ENCODE measurements at regions of chr10 and their contacts with region 1.

Region 1: DNA sequence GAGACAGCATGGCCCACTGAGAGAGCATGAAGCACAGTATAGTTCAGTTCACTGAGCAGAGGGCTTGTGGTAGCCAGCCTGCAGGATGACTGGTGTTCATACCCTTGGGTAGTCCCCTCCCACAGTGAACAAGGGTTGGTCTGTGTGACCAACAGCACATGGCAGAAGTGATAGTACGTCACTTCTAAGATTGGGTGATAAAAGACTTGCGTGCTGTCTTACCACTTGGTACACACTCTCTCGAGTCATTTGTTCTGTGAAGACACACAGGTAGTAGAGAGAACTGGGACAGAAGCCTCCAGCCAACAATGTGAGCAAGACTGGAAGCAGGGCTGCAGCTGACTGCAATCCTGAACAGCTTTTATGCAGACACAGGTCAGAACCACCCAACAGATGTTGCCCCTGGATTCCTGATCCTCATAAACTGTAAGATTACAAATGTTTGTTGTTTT is 14.6 kb downstream of the EPC1 start:
- DNase-seq: peak; percentile 87
- ATAC-seq: peak; percentile 95
- H3K4me3 Mint-ChIP-seq: peak overlapping the region; percentile 75
- H3K27ac Mint-ChIP-seq: peak overlapping the region; percentile 98
- H3K4me1 Mint-ChIP-seq: peaks cover 96% of the 10 kb centered on the region
- H3K27me3 Mint-ChIP-seq: no peaks in the 10 kb centered on the region

Region 2: GRCh38 chr10:31549896-31550295 is 782.4 kb before region 1 on chr10:
- CTCF ChIA-PET with region 1: no interaction called
- POLR2A ChIA-PET with region 1: no interaction called
- intact Hi-C with region 1: no loop called
- DNase-seq: no peak
- ATAC-seq: no peak
- H3K4me3 Mint-ChIP-seq: no peak overlapping the region
- H3K27ac Mint-ChIP-seq: no peak overlapping the region
- H3K4me1 Mint-ChIP-seq: no peaks in the 10 kb centered on the region
- H3K27me3 Mint-ChIP-seq: no peaks in the 10 kb centered on the region

Region 3: DNA sequence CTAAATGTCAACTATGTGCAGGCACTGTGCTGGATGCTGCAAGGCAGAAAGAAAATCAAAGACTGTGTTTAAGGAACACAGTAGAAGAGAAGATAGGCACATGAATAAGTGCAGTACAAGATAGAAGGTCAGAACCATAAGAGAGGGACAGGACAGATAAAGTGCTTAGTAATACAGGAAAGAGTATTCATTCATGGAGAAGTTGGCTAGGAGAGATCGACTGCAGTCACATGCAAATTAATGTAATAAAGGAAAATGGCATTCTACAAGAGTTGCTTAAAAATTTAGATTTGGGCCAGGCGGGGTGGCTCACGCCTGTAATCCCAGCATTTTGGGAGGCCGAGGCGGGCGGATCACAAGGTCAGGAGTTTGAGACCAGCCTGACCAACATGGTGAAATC is 300.9 kb before region 1 on chr10:
- CTCF ChIA-PET with region 1: no interaction called
- POLR2A ChIA-PET with region 1: no interaction called
- intact Hi-C with region 1: no loop called
- DNase-seq: no peak
- ATAC-seq: no peak
- H3K4me3 Mint-ChIP-seq: no peak overlapping the region
- H3K27ac Mint-ChIP-seq: no peak overlapping the region
- H3K4me1 Mint-ChIP-seq: peaks cover 2% of the 10 kb centered on the region
- H3K27me3 Mint-ChIP-seq: no peaks in the 10 kb centered on the region

Region 4: DNA sequence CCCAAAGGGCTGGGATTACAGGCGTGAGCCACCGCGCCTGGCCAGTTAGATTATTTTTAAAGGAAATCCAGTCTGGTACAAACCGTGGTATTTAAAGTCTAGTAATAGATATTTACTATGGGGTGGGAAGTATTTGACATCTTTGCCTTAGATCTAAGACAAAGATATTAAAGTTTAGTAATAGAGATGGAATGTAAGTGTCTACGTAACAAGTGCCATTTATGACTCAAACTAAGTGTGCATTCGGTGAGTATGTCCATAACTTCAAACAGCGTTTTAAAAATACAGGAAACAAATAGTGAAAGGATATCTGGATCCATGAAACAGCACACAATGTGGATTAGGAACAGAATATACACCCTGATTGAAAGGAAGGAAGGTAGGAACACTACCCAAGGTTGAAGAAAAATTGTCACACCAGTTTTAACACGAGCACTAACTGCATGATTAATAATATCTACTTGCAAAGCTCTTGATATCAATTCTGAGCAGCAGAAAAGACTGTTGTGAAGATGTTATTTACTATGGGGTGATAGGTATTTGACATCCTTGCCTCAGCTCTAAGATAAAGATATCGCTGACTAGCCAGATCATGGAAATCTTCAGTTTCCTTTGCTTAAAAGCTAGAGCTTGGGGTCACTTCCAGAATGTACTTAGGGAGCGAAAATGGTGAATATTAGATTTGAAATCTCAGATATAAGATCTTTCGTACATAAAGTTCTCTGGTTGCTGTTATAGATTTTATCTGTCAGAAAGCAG is 34.1 kb before region 1 on chr10:
- CTCF ChIA-PET with region 1: interaction called, 4 read pairs
- POLR2A ChIA-PET with region 1: interaction called, 3 read pairs
- intact Hi-C with region 1: loop called in 1 of 2 experiments (anchors 5 kb)
- DNase-seq: no peak
- ATAC-seq: no peak
- H3K4me3 Mint-ChIP-seq: peak overlapping the region; percentile 50
- H3K27ac Mint-ChIP-seq: peak overlapping the region; percentile 82
- H3K4me1 Mint-ChIP-seq: peaks cover 59% of the 10 kb centered on the region
- H3K27me3 Mint-ChIP-seq: no peaks in the 10 kb centered on the region

Region 5: DNA sequence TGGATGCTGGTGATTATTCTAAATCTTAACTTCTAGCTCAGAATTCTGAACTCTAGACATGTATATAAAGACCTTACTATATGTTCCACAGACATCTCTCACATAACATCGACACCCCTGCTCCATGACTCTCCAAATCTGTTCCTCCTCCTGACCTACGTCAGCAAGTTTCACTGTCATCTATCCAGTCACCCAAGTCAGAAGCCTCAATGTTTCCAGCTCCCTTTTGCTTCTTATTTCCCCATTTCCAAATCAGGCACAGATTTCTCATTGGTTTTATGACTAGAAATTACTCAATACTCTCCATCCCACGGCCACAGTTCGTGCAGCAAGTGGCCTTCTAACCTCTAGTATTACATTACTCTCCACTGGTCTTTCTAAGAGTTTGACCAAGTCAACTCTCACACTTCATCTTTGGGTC is 13.8 kb before region 1 on chr10:
- CTCF ChIA-PET with region 1: interaction called, 5 read pairs
- POLR2A ChIA-PET with region 1: interaction called, 7 read pairs
- intact Hi-C with region 1: loop called (anchors 1 kb)
- DNase-seq: peak; percentile 38
- ATAC-seq: peak; percentile 71
- H3K4me3 Mint-ChIP-seq: peak overlapping the region; percentile 1
- H3K27ac Mint-ChIP-seq: peak overlapping the region; percentile 69
- H3K4me1 Mint-ChIP-seq: peaks cover 87% of the 10 kb centered on the region
- H3K27me3 Mint-ChIP-seq: no peaks in the 10 kb centered on the region

Region 6: DNA sequence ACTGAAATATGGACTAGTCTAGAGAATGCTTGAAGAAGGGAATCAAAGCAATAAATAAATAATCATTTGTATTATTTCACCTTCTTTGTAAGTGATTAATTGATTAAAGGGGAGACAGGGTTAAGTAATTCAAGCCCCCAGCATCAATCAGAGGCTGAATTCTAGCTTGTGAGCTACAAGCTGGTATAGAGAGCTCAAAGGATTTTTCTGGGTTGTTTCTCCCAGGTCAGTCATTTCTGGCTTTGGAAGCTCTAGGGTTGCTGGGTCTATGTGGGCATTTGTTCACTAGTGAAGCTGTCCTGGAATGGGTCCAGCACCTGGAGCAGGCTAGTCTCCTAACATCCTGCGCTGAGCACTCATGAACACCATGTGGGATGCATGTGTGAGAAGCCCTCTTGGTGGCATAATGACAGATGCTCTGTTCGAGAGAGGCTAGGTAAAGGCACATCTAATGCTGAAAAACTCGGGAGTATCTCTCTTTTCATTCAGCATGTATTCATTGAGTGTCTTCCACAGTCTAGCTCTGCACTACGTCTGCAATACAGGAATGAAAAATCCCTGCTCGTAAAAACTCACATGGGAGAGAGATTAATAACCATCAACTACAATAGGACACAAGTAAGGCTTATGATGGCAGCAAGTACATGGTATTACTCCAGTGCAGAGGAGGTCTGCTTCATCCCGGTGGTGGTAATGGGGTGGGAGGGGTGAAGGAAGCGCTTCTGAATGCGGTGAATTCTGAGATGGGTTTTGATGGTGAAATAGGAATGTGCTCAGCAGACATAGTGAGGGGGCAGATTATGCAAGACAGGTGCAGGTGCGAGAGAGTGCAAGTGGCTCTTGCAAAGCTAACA is 1070.1 kb after region 1 on chr10:
- CTCF ChIA-PET with region 1: no interaction called
- POLR2A ChIA-PET with region 1: no interaction called
- intact Hi-C with region 1: no loop called
- DNase-seq: no peak
- ATAC-seq: no peak
- H3K4me3 Mint-ChIP-seq: no peak overlapping the region
- H3K27ac Mint-ChIP-seq: no peak overlapping the region
- H3K4me1 Mint-ChIP-seq: no peaks in the 10 kb centered on the region
- H3K27me3 Mint-ChIP-seq: peaks cover 24% of the 10 kb centered on the region